ENCODE measurements at regions of chr22 and their contacts with region 1.

Region 1: GRCh38 chr22:17258015-17258787 is 39.0 kb upstream of the ADA2 start:
- DNase-seq: peak; percentile 82
- H3K4me3 Mint-ChIP-seq: peak overlapping the region; percentile 25
- H3K27ac Mint-ChIP-seq: peak overlapping the region; percentile 88
- H3K4me1 Mint-ChIP-seq: peaks cover 38% of the 10 kb centered on the region
- H3K27me3 Mint-ChIP-seq: no peaks in the 10 kb centered on the region

Region 2: GRCh38 chr22:17043521-17043920 is 214.7 kb before region 1 on chr22:
- CTCF ChIA-PET with region 1: no interaction called
- POLR2A ChIA-PET with region 1: no interaction called
- DNase-seq: no peak
- H3K4me3 Mint-ChIP-seq: no peak overlapping the region
- H3K27ac Mint-ChIP-seq: no peak overlapping the region
- H3K4me1 Mint-ChIP-seq: no peaks in the 10 kb centered on the region
- H3K27me3 Mint-ChIP-seq: peaks cover 2% of the 10 kb centered on the region

Region 3: DNA sequence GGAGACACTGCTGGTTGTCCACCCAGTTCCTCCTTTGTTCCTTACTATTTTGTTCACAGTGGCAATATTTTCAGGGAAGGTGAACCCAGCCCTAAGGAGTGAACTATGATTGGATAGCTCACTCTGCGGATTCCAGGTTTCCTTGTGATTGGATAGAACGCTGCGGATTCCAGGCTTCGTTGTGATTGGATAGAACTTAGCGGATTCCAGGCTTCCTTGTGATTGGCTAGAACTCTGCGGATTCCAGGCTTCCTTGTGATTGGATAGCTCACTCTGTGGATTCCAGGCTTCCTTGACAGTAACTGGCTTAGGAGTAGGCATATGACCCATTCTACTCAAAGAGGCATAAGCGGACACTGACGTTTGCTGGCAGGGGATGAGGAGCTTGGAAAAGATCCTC is 10.4 kb before region 1 on chr22:
- CTCF ChIA-PET with region 1: interaction called, 16 read pairs
- POLR2A ChIA-PET with region 1: interaction called, 7 read pairs
- DNase-seq: no peak
- H3K4me3 Mint-ChIP-seq: no peak overlapping the region
- H3K27ac Mint-ChIP-seq: no peak overlapping the region
- H3K4me1 Mint-ChIP-seq: peaks cover 14% of the 10 kb centered on the region
- H3K27me3 Mint-ChIP-seq: no peaks in the 10 kb centered on the region

Measured in activated CD4-positive, alpha-beta T cell treated with anti-CD3 and anti-CD28 coated beads, Interleukin-2, amount 10 ng/mL, durations not matched to agents 7 days and 5 days (primary cell).